ENCODE measurements at regions of chr6 and their contacts with region 1.

Region 1: GRCh38 chr6:12890171-12890790 is 173.7 kb downstream of the PHACTR1 start:
- DNase-seq: peak; percentile 42
- H3K4me3 ChIP-seq: no peak overlapping the region
- H3K27ac ChIP-seq: no peak overlapping the region
- H3K4me1 ChIP-seq: peaks cover 6 to 12% (median 9%) of the 10 kb centered on the region in 4 donors
- H3K27me3 ChIP-seq: no peaks in the 10 kb centered on the region
- CTCF ChIP-seq: peak in 1 of 3 experiments; percentile 31
- EP300 ChIP-seq: no peak
- POLR2A ChIP-seq: no peak

Region 2: GRCh38 chr6:12637960-12638641 is 252.2 kb before region 1 on chr6:
- intact Hi-C with region 1: loop called (anchors 5 kb)
- DNase-seq: no peak
- H3K4me3 ChIP-seq: no peak overlapping the region
- H3K27ac ChIP-seq: no peak overlapping the region
- H3K4me1 ChIP-seq: no peaks in the 10 kb centered on the region
- H3K27me3 ChIP-seq: no peaks in the 10 kb centered on the region
- CTCF ChIP-seq: peak; percentile 35 to 57 (median 42)
- EP300 ChIP-seq: no peak
- POLR2A ChIP-seq: no peak

Region 3: DNA sequence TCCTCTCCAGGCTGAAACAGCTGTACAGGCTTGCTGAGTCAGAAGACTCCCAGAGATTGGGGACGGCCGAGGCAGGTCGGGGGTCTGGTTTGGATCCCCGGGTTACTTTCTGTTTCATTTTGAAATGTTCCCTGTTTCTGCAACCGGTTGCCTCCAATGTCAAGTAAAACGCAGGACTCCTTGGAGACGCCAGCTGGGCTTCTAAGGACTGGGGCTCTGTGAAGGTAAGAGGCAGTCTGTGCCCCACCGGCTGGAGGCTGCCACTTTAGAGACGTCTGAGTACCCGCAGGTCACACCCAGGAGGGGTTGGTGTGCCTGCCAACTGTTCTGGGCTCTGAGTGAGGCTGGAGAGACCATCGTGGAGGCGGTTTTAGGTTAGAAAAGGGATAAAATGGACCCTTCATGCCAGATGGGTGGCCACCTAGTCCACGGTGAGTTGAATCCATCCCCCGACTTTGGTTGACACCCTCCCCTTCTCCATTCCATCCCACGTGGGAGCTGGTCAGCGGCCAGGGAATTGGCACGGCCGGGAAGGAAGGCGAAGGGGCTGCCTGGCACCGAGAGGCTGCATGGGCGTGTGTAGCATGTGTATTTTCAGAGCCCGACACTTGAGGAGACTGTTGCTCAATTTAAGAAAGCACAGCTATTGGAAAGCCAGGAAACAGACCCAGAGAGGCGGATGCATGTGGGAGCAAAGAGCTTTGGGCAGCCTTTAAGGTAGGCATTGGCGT is 67.2 kb after region 1 on chr6:
- intact Hi-C with region 1: no loop called
- DNase-seq: no peak
- H3K4me3 ChIP-seq: peak overlapping the region; percentile 48 to 67 (median 65)
- H3K27ac ChIP-seq: peak overlapping the region; percentile 60 to 69 (median 68)
- H3K4me1 ChIP-seq: peaks cover 8 to 19% (median 16%) of the 10 kb centered on the region in 4 donors
- H3K27me3 ChIP-seq: peaks cover 0 to 7% (median 0%) of the 10 kb centered on the region in 4 donors
- CTCF ChIP-seq: no peak
- EP300 ChIP-seq: no peak
- POLR2A ChIP-seq: no peak